ENCODE measurements at regions of chrX and their contacts with region 1.

Region 1: GRCh38 chrX:1462596-1463251 is 10.0 kb upstream of the ASMTL start:
- DNase-seq: peak; percentile 89
- H3K4me3 Mint-ChIP-seq: peak overlapping the region; percentile 61
- H3K27ac Mint-ChIP-seq: peak overlapping the region; percentile 96
- H3K4me1 Mint-ChIP-seq: peaks cover 60% of the 10 kb centered on the region
- H3K27me3 Mint-ChIP-seq: no peaks in the 10 kb centered on the region

Region 2: DNA sequence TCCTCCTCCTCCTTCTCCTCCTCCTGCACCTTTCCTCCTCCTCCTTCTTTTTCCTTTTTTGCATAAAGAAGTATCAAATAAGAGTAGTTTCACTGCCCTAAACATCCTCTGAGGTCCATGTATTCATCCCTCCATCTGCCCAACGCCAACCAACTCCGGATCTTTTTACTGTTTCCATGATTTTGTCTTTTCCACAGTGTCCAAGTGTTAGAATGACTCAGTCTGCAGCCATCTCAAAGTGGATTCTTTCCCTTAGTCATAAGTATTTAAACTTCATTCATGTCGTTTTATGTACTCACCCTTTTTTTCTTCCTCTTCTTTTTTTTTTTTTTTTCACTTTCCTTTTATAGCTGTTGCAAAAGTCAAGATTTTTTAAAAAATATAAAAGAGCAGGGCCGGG is 181.2 kb before region 1 on chrX:
- CTCF ChIA-PET with region 1: no interaction called
- POLR2A ChIA-PET with region 1: no interaction called
- intact Hi-C with region 1: no loop called
- DNase-seq: no peak
- H3K4me3 Mint-ChIP-seq: no peak overlapping the region
- H3K27ac Mint-ChIP-seq: no peak overlapping the region
- H3K4me1 Mint-ChIP-seq: no peaks in the 10 kb centered on the region
- H3K27me3 Mint-ChIP-seq: peaks cover 6% of the 10 kb centered on the region

Region 3: DNA sequence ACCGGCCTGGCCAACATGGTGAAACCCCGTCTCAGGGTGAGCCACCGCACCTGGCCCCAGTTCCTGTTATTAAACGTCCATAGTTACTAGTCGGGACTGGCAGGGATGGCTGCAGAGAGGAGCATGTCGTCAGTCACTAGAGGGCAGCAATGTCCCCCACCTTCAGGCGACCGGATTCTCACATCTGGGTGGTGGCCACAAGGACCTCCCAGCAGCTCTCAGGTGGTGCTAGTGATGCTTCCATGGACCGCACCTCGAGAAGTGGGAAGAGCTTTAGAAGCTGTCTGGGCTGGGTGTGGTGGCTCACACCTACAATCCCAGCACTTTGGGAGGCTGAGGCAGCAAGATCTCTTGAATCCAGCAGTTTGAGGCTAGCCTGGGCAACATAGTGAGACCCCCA is 139.4 kb before region 1 on chrX:
- CTCF ChIA-PET with region 1: no interaction called
- POLR2A ChIA-PET with region 1: no interaction called
- intact Hi-C with region 1: no loop called
- DNase-seq: peak; percentile 82
- H3K4me3 Mint-ChIP-seq: no peak overlapping the region
- H3K27ac Mint-ChIP-seq: peak overlapping the region; percentile 9
- H3K4me1 Mint-ChIP-seq: peaks cover 15% of the 10 kb centered on the region
- H3K27me3 Mint-ChIP-seq: peaks cover 11% of the 10 kb centered on the region

Region 4: GRCh38 chrX:1580735-1581531 is 118.2 kb after region 1 on chrX:
- CTCF ChIA-PET with region 1: no interaction called
- POLR2A ChIA-PET with region 1: no interaction called
- intact Hi-C with region 1: loop called (anchors 2 kb)
- DNase-seq: peak; percentile 88
- H3K4me3 Mint-ChIP-seq: peak overlapping the region; percentile 50
- H3K27ac Mint-ChIP-seq: peak overlapping the region; percentile 38
- H3K4me1 Mint-ChIP-seq: peaks cover 27% of the 10 kb centered on the region
- H3K27me3 Mint-ChIP-seq: no peaks in the 10 kb centered on the region

Measured in activated CD4-positive, alpha-beta memory T cell treated with anti-CD3 and anti-CD28 coated beads for 36 hours (primary cell).